ENCODE measurements at regions of chr4 and their contacts with region 1.

Region 1: DNA sequence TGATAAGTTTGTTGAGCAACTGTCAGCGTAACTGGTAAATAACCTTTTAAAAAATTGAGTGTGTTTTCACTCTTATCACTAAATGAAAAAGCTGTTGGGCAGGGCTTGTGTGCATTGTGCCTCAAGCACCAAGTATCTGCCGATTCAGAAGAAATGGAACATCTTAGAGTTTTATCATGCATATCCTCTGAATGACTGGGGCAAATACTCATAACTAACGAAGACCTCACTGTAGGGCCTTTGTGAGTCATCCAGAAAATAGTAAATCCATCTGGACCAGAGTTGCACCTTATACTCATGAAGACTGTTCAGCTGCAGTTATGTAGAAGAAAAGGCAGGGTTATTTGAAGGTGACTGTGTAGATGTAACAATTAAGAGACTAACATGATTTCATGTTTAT is 222.1 kb downstream of the CAMK2D start:
- DNase-seq: peak; percentile 50
- ATAC-seq: peak; percentile 87
- H3K4me3 Mint-ChIP-seq: no peak overlapping the region
- H3K27ac Mint-ChIP-seq: peak overlapping the region; percentile 83
- H3K4me1 Mint-ChIP-seq: peaks cover 34% of the 10 kb centered on the region
- H3K27me3 Mint-ChIP-seq: no peaks in the 10 kb centered on the region

Region 2: DNA sequence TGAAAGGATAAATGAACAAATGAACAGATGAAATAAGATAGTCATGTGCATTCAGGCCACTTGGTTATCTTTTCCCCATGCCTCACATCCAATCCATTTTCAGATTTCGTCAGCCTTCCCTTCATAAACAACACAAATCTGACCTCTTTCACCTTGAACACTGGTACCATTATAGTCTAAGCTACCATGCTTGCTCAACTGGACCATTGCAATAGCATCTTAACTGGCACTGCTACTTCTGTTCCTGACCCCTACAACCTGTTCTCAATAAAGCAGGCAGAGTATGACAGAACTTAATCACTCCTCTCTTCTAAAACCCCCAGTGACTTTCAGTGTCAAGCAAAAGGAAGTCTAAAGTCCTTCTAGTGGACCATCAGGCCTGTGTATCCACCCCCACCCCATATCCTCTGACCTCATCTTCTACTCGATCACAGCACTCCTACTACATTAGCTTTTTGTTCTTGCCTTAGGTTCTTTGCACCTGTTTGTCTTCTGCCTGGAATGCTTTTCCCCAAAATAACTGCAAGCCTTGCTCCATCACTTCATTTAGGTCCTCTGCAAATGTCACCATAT is 861.8 kb before region 1 on chr4:
- CTCF ChIA-PET with region 1: no interaction called
- POLR2A ChIA-PET with region 1: no interaction called
- intact Hi-C with region 1: no loop called
- DNase-seq: no peak
- ATAC-seq: no peak
- H3K4me3 Mint-ChIP-seq: no peak overlapping the region
- H3K27ac Mint-ChIP-seq: no peak overlapping the region
- H3K4me1 Mint-ChIP-seq: no peaks in the 10 kb centered on the region
- H3K27me3 Mint-ChIP-seq: no peaks in the 10 kb centered on the region

Region 3: DNA sequence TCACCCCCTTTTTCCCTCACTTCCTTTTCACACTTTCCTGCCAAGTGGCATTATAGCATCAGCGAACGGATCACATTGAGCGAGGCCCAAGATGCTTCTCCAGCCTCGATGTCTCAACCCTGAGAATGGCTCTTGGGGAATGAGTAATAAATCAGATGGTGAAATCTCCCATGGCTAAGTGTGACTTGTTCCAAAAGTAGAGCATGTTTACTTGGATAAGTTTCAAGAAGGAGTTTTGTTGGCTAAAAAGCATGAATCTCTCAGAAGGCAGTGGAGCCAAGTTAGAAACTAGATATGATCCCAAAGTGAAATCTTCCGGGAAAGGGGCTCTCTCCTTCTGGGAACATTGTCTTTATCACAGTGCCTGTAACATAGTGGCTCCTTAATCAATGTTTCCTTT is 94.1 kb before region 1 on chr4:
- CTCF ChIA-PET with region 1: interaction called, 3 read pairs
- POLR2A ChIA-PET with region 1: no interaction called
- intact Hi-C with region 1: loop called in 1 of 2 experiments (anchors 1 kb)
- DNase-seq: no peak
- ATAC-seq: no peak
- H3K4me3 Mint-ChIP-seq: no peak overlapping the region
- H3K27ac Mint-ChIP-seq: peak overlapping the region; percentile 85
- H3K4me1 Mint-ChIP-seq: peaks cover 27% of the 10 kb centered on the region
- H3K27me3 Mint-ChIP-seq: no peaks in the 10 kb centered on the region

Region 4: GRCh38 chr4:113474017-113474416 is 65.4 kb before region 1 on chr4:
- CTCF ChIA-PET with region 1: interaction called, 5 read pairs
- POLR2A ChIA-PET with region 1: no interaction called
- intact Hi-C with region 1: loop called (anchors 1 kb)
- DNase-seq: peak; percentile 47
- ATAC-seq: peak; percentile 76
- H3K4me3 Mint-ChIP-seq: no peak overlapping the region
- H3K27ac Mint-ChIP-seq: peak overlapping the region; percentile 88
- H3K4me1 Mint-ChIP-seq: peaks cover 66% of the 10 kb centered on the region
- H3K27me3 Mint-ChIP-seq: no peaks in the 10 kb centered on the region

Region 5: DNA sequence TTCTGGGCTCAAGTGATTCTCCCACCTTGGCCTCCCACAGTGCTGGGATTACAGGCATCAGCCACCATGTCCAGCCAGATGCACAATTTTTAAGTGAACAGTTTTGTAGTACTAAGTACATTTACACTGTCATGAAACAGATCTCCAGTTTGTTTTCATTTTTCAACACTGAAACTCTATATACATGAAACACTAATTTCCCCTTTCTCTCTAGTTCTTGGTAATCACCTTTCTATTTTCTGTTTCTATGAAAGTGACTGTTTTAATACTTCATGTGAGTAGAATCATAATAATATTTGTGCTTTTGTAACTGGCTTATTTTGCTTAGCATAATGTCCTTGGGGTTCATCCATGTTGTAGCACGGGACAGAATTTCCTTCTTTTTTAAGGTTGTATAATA is 15.3 kb before region 1 on chr4:
- CTCF ChIA-PET with region 1: interaction called, 4 read pairs
- POLR2A ChIA-PET with region 1: no interaction called
- intact Hi-C with region 1: loop called in 1 of 2 experiments (anchors 1 kb)
- DNase-seq: no peak
- ATAC-seq: peak; percentile 76
- H3K4me3 Mint-ChIP-seq: no peak overlapping the region
- H3K27ac Mint-ChIP-seq: peak overlapping the region; percentile 63
- H3K4me1 Mint-ChIP-seq: peaks cover 13% of the 10 kb centered on the region
- H3K27me3 Mint-ChIP-seq: no peaks in the 10 kb centered on the region

Region 6: DNA sequence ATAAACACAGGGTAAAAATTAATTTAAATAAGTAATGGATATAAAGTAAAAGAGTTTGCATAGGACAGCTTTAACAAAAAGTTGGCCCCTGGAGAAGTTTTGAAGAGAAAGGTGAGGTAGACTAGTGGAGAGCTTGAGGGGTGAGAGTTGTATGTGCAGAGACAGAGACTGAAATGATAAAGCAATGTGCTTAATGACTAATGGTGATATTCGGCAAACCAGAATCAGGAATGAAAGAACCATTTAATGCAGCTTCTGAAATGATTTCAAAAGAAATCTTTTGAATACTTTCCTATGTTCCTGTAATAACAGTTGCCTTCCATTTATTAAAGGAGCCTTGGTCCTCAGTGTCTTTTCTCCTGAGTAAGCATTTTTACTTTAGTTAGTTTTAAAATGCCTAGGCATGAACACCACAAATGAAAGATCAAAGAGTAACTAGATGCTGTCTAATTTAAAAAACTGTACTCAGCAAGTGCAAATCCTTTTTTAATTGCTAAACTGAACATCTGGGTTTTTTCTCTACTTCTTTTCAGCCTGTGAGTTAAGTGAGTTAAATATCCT is 193.6 kb after region 1 on chr4:
- CTCF ChIA-PET with region 1: no interaction called
- POLR2A ChIA-PET with region 1: no interaction called
- intact Hi-C with region 1: loop called in 1 of 2 experiments (anchors 1 kb)
- DNase-seq: no peak
- ATAC-seq: peak; percentile 60
- H3K4me3 Mint-ChIP-seq: no peak overlapping the region
- H3K27ac Mint-ChIP-seq: peak overlapping the region; percentile 1
- H3K4me1 Mint-ChIP-seq: peaks cover 78% of the 10 kb centered on the region
- H3K27me3 Mint-ChIP-seq: no peaks in the 10 kb centered on the region

Region 7: GRCh38 chr4:113823291-113823659 is 283.9 kb after region 1 on chr4:
- CTCF ChIA-PET with region 1: no interaction called
- POLR2A ChIA-PET with region 1: no interaction called
- intact Hi-C with region 1: loop called in 1 of 2 experiments (anchors 1 kb)
- DNase-seq: peak; percentile 12
- ATAC-seq: no peak
- H3K4me3 Mint-ChIP-seq: no peak overlapping the region
- H3K27ac Mint-ChIP-seq: peak overlapping the region; percentile 40
- H3K4me1 Mint-ChIP-seq: peaks cover 62% of the 10 kb centered on the region
- H3K27me3 Mint-ChIP-seq: no peaks in the 10 kb centered on the region

Measured in activated CD4-positive, alpha-beta T cell treated with anti-CD3 and anti-CD28 coated beads for 36 hours (primary cell).